Aorta (tissue), 5 donors: ENCODE measurements at regions of chr14 and their contacts with region 1.

Region 1: GRCh38 chr14:32469388-32470160 is 140.5 kb downstream of the AKAP6 start:
- DNase-seq: no peak
- ATAC-seq: no peak
- H3K4me3 ChIP-seq: no peak overlapping the region
- H3K27ac ChIP-seq: peak overlapping the region in 1 of 2 donors; percentile 51
- H3K4me1 ChIP-seq: peaks cover 6 to 21% of the 10 kb centered on the region in 2 donors
- H3K27me3 ChIP-seq: no peaks in the 10 kb centered on the region

Region 2: DNA sequence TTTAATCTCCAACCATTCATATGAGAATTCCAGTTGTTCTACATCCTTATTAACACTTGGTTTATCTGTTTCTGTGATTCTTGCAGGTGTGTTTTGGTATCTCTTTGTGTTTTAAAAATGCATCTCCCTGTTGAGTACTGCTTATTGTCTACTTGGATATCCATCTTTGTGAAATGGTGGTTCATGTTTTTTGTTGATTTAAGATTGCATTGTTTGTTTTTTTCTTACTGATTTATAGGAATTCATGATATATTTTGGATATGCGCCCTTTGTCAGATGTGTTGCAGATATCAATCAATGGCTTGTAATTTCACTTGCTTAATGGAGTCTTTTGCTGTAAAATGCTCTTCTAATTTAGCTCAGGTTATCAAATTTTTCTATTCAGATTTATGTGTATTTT is 732.8 kb before region 1 on chr14:
- intact Hi-C with region 1: no loop called
- DNase-seq: no peak
- ATAC-seq: no peak
- H3K4me3 ChIP-seq: no peak overlapping the region
- H3K27ac ChIP-seq: no peak overlapping the region
- H3K4me1 ChIP-seq: no peaks in the 10 kb centered on the region
- H3K27me3 ChIP-seq: no peaks in the 10 kb centered on the region

Region 3: DNA sequence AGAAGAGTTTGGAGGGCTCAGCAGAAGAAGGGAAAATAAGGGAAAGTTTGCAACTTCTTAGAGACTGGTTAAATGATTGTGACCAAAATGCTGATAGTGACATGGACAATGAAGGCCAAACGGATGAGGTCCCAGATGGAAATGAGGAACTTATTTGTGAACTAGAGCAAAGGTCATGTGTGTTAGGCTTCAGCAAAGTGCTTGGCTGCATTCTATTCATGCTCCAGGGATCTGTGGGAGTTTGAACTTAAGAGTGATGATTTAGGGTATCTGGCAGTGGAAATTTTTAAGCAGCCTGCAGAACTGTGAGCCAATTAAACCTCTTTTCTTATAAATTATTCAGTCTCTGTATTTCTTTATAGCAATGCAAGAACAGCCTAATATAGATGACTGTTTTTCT is 481.3 kb before region 1 on chr14:
- intact Hi-C with region 1: no loop called
- DNase-seq: no peak
- ATAC-seq: no peak
- H3K4me3 ChIP-seq: no peak overlapping the region
- H3K27ac ChIP-seq: no peak overlapping the region
- H3K4me1 ChIP-seq: no peaks in the 10 kb centered on the region
- H3K27me3 ChIP-seq: peaks cover 0 to 3% of the 10 kb centered on the region in 2 donors

Region 4: DNA sequence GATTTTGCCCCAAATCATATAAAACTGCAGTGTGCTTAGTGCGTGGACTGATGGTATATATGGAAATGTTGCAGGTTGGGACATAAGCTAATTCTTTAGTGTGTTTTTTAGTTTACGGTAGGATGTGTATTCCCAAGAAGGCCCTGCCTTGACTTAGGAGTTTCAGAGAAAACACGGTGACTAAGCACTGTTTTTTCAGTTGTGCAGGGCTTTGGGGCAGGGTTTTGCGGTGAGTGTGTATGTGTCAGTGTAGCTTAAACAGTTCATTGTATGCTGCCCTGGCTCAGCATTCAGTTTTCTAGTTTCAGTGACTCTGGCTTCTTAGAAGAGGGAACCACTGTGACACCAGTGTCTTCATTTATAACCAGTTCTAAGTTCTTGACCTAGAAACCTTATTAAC is 39.2 kb before region 1 on chr14:
- intact Hi-C with region 1: loop called in 1 of 2 experiments (anchors 5 kb)
- DNase-seq: no peak
- ATAC-seq: no peak
- H3K4me3 ChIP-seq: no peak overlapping the region
- H3K27ac ChIP-seq: no peak overlapping the region
- H3K4me1 ChIP-seq: peaks cover 2 to 3% of the 10 kb centered on the region in 2 donors
- H3K27me3 ChIP-seq: no peaks in the 10 kb centered on the region

Region 5: DNA sequence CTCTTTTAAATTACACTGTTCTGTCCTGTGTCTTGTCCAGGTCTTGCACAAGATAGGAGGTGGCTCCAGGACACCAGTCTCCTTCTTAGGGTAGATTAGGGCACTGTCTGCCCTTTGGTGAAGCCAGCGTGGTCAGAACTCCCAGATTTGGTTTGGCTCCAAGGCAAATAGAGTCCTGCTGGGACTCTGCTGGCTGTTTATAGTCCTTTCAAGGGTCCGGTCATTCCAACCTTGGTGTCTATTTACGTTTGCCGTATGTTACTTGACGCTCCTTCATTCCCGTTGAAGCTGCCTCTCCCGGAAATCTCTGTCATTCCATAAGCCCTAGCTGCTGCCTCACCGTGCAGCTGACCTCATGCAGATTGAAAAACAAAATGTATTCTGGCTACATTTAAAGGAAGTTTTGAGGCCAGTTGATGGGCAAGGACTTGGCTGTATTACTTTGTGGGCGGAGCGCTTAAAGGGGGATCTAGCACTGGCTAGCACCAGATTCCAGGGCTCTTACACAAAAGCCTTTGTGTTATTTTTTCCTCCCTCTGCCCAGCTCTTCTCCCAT is 40.1 kb after region 1 on chr14:
- intact Hi-C with region 1: loop called (anchors 5 kb)
- DNase-seq: peak; percentile 81 to 90
- ATAC-seq: peak; percentile 78
- H3K4me3 ChIP-seq: peak overlapping the region in 1 of 2 donors; percentile 11
- H3K27ac ChIP-seq: peak overlapping the region; percentile 1 to 98
- H3K4me1 ChIP-seq: peaks cover 0 to 6% of the 10 kb centered on the region in 2 donors
- H3K27me3 ChIP-seq: no peaks in the 10 kb centered on the region

Region 6: GRCh38 chr14:32560209-32560857 is 90.8 kb after region 1 on chr14:
- intact Hi-C with region 1: loop called in 1 of 2 experiments (anchors 5 kb)
- DNase-seq: peak in 1 of 2 donors; percentile 46
- ATAC-seq: peak; percentile 80
- H3K4me3 ChIP-seq: no peak overlapping the region
- H3K27ac ChIP-seq: no peak overlapping the region
- H3K4me1 ChIP-seq: peaks cover 3 to 6% of the 10 kb centered on the region in 2 donors
- H3K27me3 ChIP-seq: no peaks in the 10 kb centered on the region